Activated CD4-positive, alpha-beta memory T cell treated with anti-CD3 and anti-CD28 coated beads for 36 hours (primary cell): ENCODE measurements at regions of chr6 and their contacts with region 1.

Region 1: GRCh38 chr6:157845493-157846259 is 22.6 kb downstream of the SNX9 start:
- DNase-seq: no peak
- H3K4me3 Mint-ChIP-seq: no peak overlapping the region
- H3K27ac Mint-ChIP-seq: peak overlapping the region; percentile 63
- H3K4me1 Mint-ChIP-seq: peaks cover 91% of the 10 kb centered on the region
- H3K27me3 Mint-ChIP-seq: no peaks in the 10 kb centered on the region

Region 2: GRCh38 chr6:157830354-157831017 is 15.2 kb before region 1 on chr6:
- CTCF ChIA-PET with region 1: interaction called, 5 read pairs
- POLR2A ChIA-PET with region 1: interaction called, 23 read pairs
- intact Hi-C with region 1: loop called (anchors 1 kb)
- DNase-seq: no peak
- H3K4me3 Mint-ChIP-seq: peak overlapping the region; percentile 20
- H3K27ac Mint-ChIP-seq: peak overlapping the region; percentile 62
- H3K4me1 Mint-ChIP-seq: peaks cover 69% of the 10 kb centered on the region
- H3K27me3 Mint-ChIP-seq: no peaks in the 10 kb centered on the region

Region 3: GRCh38 chr6:157912326-157912725 is 66.7 kb after region 1 on chr6:
- CTCF ChIA-PET with region 1: no interaction called
- POLR2A ChIA-PET with region 1: no interaction called
- intact Hi-C with region 1: no loop called
- DNase-seq: no peak
- H3K4me3 Mint-ChIP-seq: no peak overlapping the region
- H3K27ac Mint-ChIP-seq: no peak overlapping the region
- H3K4me1 Mint-ChIP-seq: peaks cover 13% of the 10 kb centered on the region
- H3K27me3 Mint-ChIP-seq: no peaks in the 10 kb centered on the region